CD8-positive, alpha-beta T cell (primary cell): ENCODE measurements at regions of chr1 and their contacts with region 1.

Region 1: GRCh38 chr1:186985889-186986491 is 157.2 kb downstream of the PLA2G4A start:
- DNase-seq: peak in 2 of 9 experiments; percentile 34 to 51
- ATAC-seq: no peak
- H3K4me3 ChIP-seq: no peak overlapping the region
- H3K4me3 Mint-ChIP-seq: no peak overlapping the region
- H3K27ac ChIP-seq: no peak overlapping the region
- H3K27ac Mint-ChIP-seq: no peak overlapping the region
- H3K4me1 ChIP-seq: no peaks in the 10 kb centered on the region
- H3K4me1 Mint-ChIP-seq: no peaks in the 10 kb centered on the region
- H3K27me3 ChIP-seq: no peaks in the 10 kb centered on the region
- H3K27me3 Mint-ChIP-seq: no peaks in the 10 kb centered on the region
- CTCF ChIP-seq: peak; percentile 67

Region 2: DNA sequence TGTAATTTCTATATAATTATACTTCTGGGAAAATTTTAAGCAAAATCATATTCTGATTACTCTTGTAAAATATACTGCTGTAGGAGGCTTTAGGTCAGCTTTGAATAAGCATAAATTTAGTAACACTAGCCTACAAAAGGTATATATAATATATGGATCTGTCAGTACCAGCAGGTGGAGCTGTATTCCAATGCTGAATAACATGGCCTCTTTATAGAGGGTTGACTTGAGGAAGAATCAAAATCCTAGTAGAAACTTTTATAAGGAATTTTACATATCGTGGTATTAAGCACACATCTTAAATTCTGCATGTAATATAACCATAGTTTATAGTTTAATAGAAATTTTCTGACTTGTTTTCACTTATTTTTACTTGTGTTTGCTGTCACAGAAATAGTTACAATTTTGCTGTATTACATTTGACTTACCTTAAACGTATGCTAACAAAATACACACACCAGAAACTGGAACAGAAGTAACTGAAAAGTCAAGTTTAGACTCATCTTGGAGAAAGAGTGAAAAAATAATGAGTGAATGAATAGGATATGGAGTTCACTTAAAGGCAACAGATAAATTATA is 1172.5 kb before region 1 on chr1:
- CTCF ChIA-PET with region 1: no interaction called
- POLR2A ChIA-PET with region 1: no interaction called
- intact Hi-C with region 1: loop called in 1 of 2 experiments (anchors 5 kb)
- DNase-seq: peak in 2 of 9 experiments; percentile 3 to 24
- ATAC-seq: no peak
- H3K4me3 ChIP-seq: no peak overlapping the region
- H3K4me3 Mint-ChIP-seq: no peak overlapping the region
- H3K27ac ChIP-seq: no peak overlapping the region
- H3K27ac Mint-ChIP-seq: no peak overlapping the region
- H3K4me1 ChIP-seq: no peaks in the 10 kb centered on the region
- H3K4me1 Mint-ChIP-seq: no peaks in the 10 kb centered on the region
- H3K27me3 ChIP-seq: no peaks in the 10 kb centered on the region
- H3K27me3 Mint-ChIP-seq: peaks cover 3% of the 10 kb centered on the region
- CTCF ChIP-seq: no peak

Region 3: DNA sequence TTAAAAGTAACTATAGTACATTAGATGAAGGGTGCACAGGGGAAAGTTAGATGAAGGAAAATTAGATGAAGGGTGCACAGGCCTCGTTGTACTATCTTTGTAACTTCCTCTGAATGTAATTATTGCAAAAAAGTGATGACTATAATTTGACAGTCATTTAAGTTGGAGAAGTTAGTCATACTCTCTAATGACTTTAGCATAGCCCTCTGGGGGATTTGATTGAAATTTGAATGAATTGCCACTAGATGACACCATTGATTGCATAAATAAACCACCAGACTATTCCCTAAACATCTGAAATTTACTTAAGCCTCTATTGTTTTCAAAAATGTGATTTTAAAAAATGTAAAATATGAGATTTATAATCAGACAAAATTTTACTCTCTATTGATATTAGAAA is 713.5 kb before region 1 on chr1:
- CTCF ChIA-PET with region 1: interaction called, 3 read pairs
- POLR2A ChIA-PET with region 1: no interaction called
- intact Hi-C with region 1: loop called in 1 of 2 experiments (anchors 2 kb)
- DNase-seq: peak in 2 of 9 experiments; percentile 11 to 27
- ATAC-seq: peak; percentile 38
- H3K4me3 ChIP-seq: no peak overlapping the region
- H3K4me3 Mint-ChIP-seq: no peak overlapping the region
- H3K27ac ChIP-seq: no peak overlapping the region
- H3K27ac Mint-ChIP-seq: no peak overlapping the region
- H3K4me1 ChIP-seq: no peaks in the 10 kb centered on the region
- H3K4me1 Mint-ChIP-seq: peaks cover 2% of the 10 kb centered on the region
- H3K27me3 ChIP-seq: no peaks in the 10 kb centered on the region
- H3K27me3 Mint-ChIP-seq: peaks cover 6% of the 10 kb centered on the region
- CTCF ChIP-seq: peak; percentile 45

Region 4: GRCh38 chr1:186404454-186405051 is 581.4 kb before region 1 on chr1:
- CTCF ChIA-PET with region 1: interaction called, 5 read pairs
- POLR2A ChIA-PET with region 1: no interaction called
- intact Hi-C with region 1: loop called (anchors 1 to 2 kb)
- DNase-seq: peak in 2 of 9 experiments; percentile 40 to 62
- ATAC-seq: peak; percentile 95
- H3K4me3 ChIP-seq: no peak overlapping the region
- H3K4me3 Mint-ChIP-seq: no peak overlapping the region
- H3K27ac ChIP-seq: no peak overlapping the region
- H3K27ac Mint-ChIP-seq: no peak overlapping the region
- H3K4me1 ChIP-seq: no peaks in the 10 kb centered on the region
- H3K4me1 Mint-ChIP-seq: peaks cover 4% of the 10 kb centered on the region
- H3K27me3 ChIP-seq: no peaks in the 10 kb centered on the region
- H3K27me3 Mint-ChIP-seq: no peaks in the 10 kb centered on the region
- CTCF ChIP-seq: peak; percentile 84

Region 5: GRCh38 chr1:186482661-186483255 is 503.2 kb before region 1 on chr1:
- CTCF ChIA-PET with region 1: interaction called, 4 read pairs
- POLR2A ChIA-PET with region 1: no interaction called
- intact Hi-C with region 1: loop called in 1 of 2 experiments (anchors 1 kb)
- DNase-seq: peak; percentile 1 to 56 (median 28)
- ATAC-seq: peak; percentile 46
- H3K4me3 ChIP-seq: no peak overlapping the region
- H3K4me3 Mint-ChIP-seq: no peak overlapping the region
- H3K27ac ChIP-seq: no peak overlapping the region
- H3K27ac Mint-ChIP-seq: no peak overlapping the region
- H3K4me1 ChIP-seq: no peaks in the 10 kb centered on the region
- H3K4me1 Mint-ChIP-seq: no peaks in the 10 kb centered on the region
- H3K27me3 ChIP-seq: no peaks in the 10 kb centered on the region
- H3K27me3 Mint-ChIP-seq: peaks cover 2% of the 10 kb centered on the region
- CTCF ChIP-seq: peak; percentile 63

Region 6: DNA sequence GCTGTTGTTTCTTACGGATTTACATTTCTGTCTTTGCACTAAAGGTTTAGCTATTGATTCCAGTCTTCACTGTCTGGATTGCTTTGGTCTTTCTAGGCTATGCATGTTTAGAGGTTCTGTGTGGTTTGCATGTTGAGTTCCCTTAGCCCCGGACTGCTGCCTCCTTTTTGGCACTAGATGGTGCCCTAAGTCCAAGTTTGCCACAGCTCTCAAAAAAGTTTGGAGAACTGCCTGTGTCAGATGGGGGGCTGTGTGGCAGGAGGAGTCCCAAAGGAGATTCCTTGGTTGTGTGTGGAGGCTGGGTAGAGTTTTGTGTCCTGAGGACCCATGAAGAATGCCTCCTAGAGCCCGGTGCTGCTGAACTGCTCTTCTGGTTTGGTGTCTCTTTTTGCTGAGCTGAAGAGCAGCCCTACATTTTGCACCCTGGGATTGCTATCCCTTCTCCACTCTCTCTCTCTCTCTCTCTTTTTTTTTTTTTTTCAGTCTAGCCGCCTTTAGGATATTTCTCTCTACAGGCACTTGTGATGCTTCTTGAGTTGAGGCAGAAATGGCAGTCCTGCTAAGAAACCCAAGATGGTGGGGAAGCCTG is 380.1 kb before region 1 on chr1:
- CTCF ChIA-PET with region 1: interaction called, 12 read pairs
- POLR2A ChIA-PET with region 1: no interaction called
- intact Hi-C with region 1: loop called (anchors 2 to 5 kb)
- DNase-seq: peak in 3 of 9 experiments; percentile 9 to 42 (median 27)
- ATAC-seq: no peak
- H3K4me3 ChIP-seq: no peak overlapping the region
- H3K4me3 Mint-ChIP-seq: no peak overlapping the region
- H3K27ac ChIP-seq: no peak overlapping the region
- H3K27ac Mint-ChIP-seq: no peak overlapping the region
- H3K4me1 ChIP-seq: no peaks in the 10 kb centered on the region
- H3K4me1 Mint-ChIP-seq: no peaks in the 10 kb centered on the region
- H3K27me3 ChIP-seq: no peaks in the 10 kb centered on the region
- H3K27me3 Mint-ChIP-seq: peaks cover 5% of the 10 kb centered on the region
- CTCF ChIP-seq: peak; percentile 22

Region 7: DNA sequence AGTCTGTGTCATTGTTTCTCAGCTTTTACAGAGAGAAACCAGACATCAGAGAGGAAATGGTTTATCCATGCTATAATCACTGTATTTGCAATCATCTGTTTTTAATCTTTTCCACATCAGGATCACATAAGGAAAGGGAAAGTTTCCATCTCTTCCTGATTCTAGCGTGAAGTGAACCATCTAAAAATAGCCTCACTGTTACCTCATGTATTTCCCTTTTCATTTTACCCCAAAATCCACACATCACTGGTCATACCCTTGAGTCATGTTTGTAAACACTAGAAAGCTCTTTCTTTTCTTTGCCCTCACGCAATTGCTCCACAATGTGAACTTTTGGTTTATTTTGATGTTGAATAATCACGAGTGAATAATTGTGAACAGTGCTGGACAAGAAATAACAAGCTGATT is 11.2 kb before region 1 on chr1:
- CTCF ChIA-PET with region 1: no interaction called
- POLR2A ChIA-PET with region 1: no interaction called
- intact Hi-C with region 1: no loop called
- DNase-seq: peak in 1 of 9 experiments; percentile 2
- ATAC-seq: no peak
- H3K4me3 ChIP-seq: no peak overlapping the region
- H3K4me3 Mint-ChIP-seq: no peak overlapping the region
- H3K27ac ChIP-seq: no peak overlapping the region
- H3K27ac Mint-ChIP-seq: no peak overlapping the region
- H3K4me1 ChIP-seq: no peaks in the 10 kb centered on the region
- H3K4me1 Mint-ChIP-seq: no peaks in the 10 kb centered on the region
- H3K27me3 ChIP-seq: no peaks in the 10 kb centered on the region
- H3K27me3 Mint-ChIP-seq: no peaks in the 10 kb centered on the region
- CTCF ChIP-seq: no peak

Region 8: GRCh38 chr1:187096689-187097088 is 110.7 kb after region 1 on chr1:
- CTCF ChIA-PET with region 1: no interaction called
- POLR2A ChIA-PET with region 1: no interaction called
- intact Hi-C with region 1: no loop called
- DNase-seq: no peak
- ATAC-seq: no peak
- H3K4me3 ChIP-seq: no peak overlapping the region
- H3K4me3 Mint-ChIP-seq: no peak overlapping the region
- H3K27ac ChIP-seq: no peak overlapping the region
- H3K27ac Mint-ChIP-seq: no peak overlapping the region
- H3K4me1 ChIP-seq: peaks cover 7% of the 10 kb centered on the region
- H3K4me1 Mint-ChIP-seq: peaks cover 17% of the 10 kb centered on the region
- H3K27me3 ChIP-seq: no peaks in the 10 kb centered on the region
- H3K27me3 Mint-ChIP-seq: no peaks in the 10 kb centered on the region
- CTCF ChIP-seq: no peak